GM23248 (cell line): ENCODE measurements at regions of chr16 and their contacts with region 1.

Region 1: GRCh38 chr16:19086322-19087199 is 19.1 kb downstream of the COQ7 start:
- DNase-seq: peak; percentile 92
- H3K4me3 ChIP-seq: peak overlapping the region; percentile 81
- H3K27ac ChIP-seq: no peak overlapping the region
- H3K4me1 ChIP-seq: peaks cover 5% of the 10 kb centered on the region
- H3K27me3 ChIP-seq: no peaks in the 10 kb centered on the region

Region 2: DNA sequence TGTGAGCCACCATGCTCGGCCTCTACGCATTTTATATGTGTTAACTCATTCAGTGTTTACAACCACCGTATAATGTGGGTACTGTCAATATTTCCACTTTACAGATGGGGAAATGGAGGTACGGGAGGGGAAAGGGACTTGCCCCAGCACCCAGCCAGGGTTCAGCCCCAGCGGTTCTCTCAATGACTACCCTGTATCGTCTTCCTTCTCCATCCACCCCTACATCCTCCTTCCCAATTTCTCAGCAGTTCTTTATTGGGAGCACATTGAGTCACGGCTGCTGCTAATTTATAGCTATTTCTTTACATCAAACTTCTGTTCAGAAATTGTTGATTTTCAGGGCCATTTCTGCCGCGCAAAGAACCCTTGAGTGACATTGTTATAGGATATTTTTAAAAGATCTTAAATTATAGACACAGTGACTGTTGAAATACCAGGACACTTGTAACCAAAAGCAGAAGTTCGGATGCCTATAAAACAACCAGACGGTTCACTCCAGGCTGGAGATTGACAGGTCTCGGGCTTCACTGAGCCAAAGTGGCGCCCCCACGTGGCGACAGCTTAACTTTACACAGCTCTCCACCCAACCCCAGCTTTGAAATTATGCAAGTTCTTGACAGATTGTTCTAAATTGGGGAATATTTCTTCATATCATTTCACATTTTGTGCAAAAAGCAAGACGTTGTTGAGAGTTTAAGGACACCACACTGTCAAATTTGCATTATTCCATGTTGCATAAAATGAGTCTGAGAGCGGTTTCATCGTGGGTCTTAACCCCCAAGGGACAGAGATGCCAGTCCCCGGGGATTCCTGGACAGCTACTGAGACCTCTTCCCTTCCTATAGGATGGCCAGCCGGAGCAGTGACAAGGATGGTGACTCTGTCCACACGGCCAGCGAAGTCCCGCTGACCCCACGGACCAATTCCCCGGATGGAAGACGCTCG is 93.3 kb after region 1 on chr16:
- in situ Hi-C with region 1: loop called (anchors 10 kb)
- DNase-seq: peak; percentile 67
- H3K4me3 ChIP-seq: no peak overlapping the region
- H3K27ac ChIP-seq: no peak overlapping the region
- H3K4me1 ChIP-seq: peaks cover 9% of the 10 kb centered on the region
- H3K27me3 ChIP-seq: no peaks in the 10 kb centered on the region; the same call in 1 of the 2 replicates

Region 3: DNA sequence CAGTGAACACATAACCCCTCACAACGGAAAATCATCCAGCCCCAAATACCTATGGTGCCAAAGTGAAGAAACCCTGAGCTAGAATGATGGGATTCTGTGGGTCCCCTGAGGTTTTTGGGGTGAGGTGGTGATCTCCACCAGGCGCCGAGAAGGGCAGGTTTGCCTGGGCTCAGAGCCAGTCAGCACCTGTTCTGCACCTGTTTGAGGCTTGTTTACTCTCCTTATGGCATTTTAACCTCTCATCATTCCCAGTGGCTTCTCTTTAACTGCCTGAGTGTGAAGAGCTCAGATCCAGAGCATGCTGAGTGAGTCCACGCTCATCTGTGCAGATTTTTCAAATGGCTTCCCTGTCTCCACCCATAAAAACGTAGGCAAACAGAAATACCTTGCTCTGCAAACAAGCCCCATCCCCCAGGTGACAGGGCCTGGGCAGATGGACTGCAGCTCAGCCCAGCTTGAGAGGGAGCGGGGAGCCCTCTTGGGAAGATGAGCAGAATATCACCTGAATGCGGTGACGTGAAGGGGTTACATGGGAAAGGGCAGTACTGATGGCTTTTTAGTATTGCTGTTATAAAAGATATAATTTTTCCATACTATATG is 158.9 kb after region 1 on chr16:
- in situ Hi-C with region 1: no loop called
- DNase-seq: no peak
- H3K4me3 ChIP-seq: no peak overlapping the region
- H3K27ac ChIP-seq: no peak overlapping the region
- H3K4me1 ChIP-seq: no peaks in the 10 kb centered on the region
- H3K27me3 ChIP-seq: no peaks in the 10 kb centered on the region

Region 4: DNA sequence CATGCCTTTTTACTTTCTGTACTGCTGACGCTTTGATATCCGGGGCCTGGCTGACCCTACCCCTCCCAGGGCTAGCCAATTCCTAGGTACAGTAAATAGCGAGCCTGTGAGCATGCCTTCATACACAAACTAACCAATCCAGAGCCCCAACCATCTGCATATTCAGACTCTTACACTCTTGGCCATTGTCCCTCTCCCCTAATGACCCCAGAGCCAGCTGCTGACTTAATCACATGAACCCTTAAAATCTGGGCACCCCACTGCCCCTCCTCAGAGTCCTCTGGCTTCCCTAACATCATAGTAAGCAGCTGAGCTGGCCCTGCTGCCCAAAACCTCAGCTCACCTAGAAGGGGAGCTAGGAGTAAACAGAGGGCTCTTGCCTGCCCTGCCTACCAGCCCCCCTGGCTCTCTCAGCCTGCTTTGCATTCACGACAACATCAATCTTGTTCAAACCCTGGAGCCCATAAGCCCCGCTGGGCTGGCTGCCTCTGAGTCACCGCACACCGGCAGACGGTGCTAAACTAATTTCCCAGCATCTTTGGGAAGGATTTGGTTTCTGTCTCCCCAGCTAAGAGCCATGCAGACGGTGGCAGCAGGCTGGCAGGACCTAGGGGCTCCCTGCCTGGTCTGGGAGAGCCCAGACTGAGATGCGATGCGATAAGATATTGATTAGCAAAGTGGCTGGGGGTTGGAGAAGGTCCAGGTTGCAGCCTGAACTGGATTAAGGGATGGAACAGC is 262.2 kb after region 1 on chr16:
- in situ Hi-C with region 1: loop called (anchors 10 kb)
- DNase-seq: peak; percentile 10
- H3K4me3 ChIP-seq: no peak overlapping the region
- H3K27ac ChIP-seq: no peak overlapping the region
- H3K4me1 ChIP-seq: no peaks in the 10 kb centered on the region
- H3K27me3 ChIP-seq: no peaks in the 10 kb centered on the region

Region 5: GRCh38 chr16:19389246-19389645 is 302.7 kb after region 1 on chr16:
- in situ Hi-C with region 1: loop called (anchors 10 kb)
- DNase-seq: peak; percentile 43
- H3K4me3 ChIP-seq: no peak overlapping the region
- H3K27ac ChIP-seq: no peak overlapping the region
- H3K4me1 ChIP-seq: no peaks in the 10 kb centered on the region
- H3K27me3 ChIP-seq: no peaks in the 10 kb centered on the region

Region 6: GRCh38 chr16:19521471-19522396 is 435.2 kb after region 1 on chr16 and contains the start of gene GDE1:
- in situ Hi-C with region 1: loop called (anchors 25 kb)
- DNase-seq: peak; percentile 97
- H3K4me3 ChIP-seq: peak within 1 kb of the TSS; percentile 81
- H3K27ac ChIP-seq: peak within 1 kb of the TSS; percentile 69
- H3K4me1 ChIP-seq: peaks cover 6% of the 10 kb centered on the region
- H3K27me3 ChIP-seq: no peaks in the 10 kb centered on the region
- total RNA-seq, gene GDE1: 77.1 and 85.0 TPM in 2 replicates

Region 7: DNA sequence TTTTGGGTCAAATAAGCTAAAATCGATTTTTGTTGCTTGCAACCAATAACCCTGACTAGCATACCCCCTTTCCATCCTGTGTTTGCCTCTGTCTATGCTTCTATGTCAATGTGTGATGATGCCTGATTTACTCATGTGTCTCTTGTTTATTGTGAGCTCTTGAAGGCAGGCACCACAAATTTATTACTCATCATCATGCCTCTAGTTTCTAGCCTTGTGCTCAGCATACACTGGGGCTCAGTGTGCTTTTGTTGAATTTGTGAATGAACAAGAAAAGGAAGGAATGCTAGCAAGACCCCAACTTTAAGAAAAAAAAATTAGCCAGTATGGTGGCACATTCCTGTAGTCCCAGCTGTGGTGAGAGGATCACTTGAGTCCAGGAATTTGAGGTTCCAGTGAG is 1106.2 kb after region 1 on chr16:
- in situ Hi-C with region 1: no loop called
- DNase-seq: no peak
- H3K4me3 ChIP-seq: no peak overlapping the region
- H3K27ac ChIP-seq: no peak overlapping the region
- H3K4me1 ChIP-seq: no peaks in the 10 kb centered on the region
- H3K27me3 ChIP-seq: no peaks in the 10 kb centered on the region